CD8-positive, alpha-beta T cell (primary cell): ENCODE measurements at regions of chr22 and their contacts with region 1.

Region 1: DNA sequence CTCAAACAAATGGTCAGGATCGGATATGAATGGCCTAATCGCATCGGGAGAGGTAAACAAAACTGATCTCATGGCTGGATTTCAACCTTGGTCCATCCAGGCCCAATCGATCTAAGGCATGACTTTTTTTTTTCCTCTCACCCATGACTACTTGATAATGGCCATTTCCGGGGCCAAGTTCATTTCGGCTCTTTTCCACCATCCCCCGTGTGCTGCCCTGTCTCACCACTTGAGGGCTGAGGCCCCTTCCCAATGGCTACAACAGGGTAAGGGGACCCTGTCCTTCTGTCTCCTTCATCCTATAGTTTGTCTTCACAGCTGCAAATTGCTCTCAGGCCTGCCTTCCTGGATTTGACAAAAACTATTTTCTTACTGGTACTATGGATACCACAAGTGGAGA is 26.7 kb downstream of the GRAP2 start:
- DNase-seq: peak in 2 of 9 experiments; percentile 11 to 52
- ATAC-seq: no peak
- H3K4me3 ChIP-seq: peak overlapping the region; percentile 56 to 76
- H3K4me3 Mint-ChIP-seq: no peak overlapping the region
- H3K27ac ChIP-seq: peak overlapping the region; percentile 29 to 49
- H3K27ac Mint-ChIP-seq: no peak overlapping the region
- H3K4me1 ChIP-seq: peaks cover 82% of the 10 kb centered on the region
- H3K4me1 Mint-ChIP-seq: peaks cover 40% of the 10 kb centered on the region
- H3K27me3 ChIP-seq: no peaks in the 10 kb centered on the region
- H3K27me3 Mint-ChIP-seq: no peaks in the 10 kb centered on the region
- CTCF ChIP-seq: peak; percentile 20

Region 2: DNA sequence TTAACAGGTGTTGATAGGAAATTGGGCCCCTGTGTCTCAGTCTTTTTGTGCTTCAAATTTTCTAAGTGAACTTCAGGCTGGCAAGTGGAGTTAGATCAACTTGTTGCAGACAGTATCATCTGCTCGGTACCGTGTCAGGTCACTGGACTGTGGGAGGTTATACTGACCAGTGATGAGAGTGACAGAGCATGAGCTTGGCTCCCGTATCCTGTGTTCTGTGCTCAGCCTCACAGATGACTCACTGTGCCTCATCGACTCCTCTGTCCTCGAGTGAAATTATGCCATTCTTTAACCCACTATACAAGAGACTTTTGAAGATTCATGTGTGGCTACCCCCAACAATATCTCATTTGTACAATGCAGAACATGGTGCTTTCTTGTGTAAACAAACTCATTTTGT is 18.8 kb before region 1 on chr22:
- CTCF ChIA-PET with region 1: interaction called, 58 read pairs
- POLR2A ChIA-PET with region 1: interaction called, 260 read pairs
- intact Hi-C with region 1: loop called in 1 of 2 experiments (anchors 2 kb)
- DNase-seq: peak in 5 of 9 experiments; percentile 48 to 72 (median 53)
- ATAC-seq: peak; percentile 51
- H3K4me3 ChIP-seq: peak overlapping the region; percentile 57 to 77
- H3K4me3 Mint-ChIP-seq: peak overlapping the region; percentile 97
- H3K27ac ChIP-seq: peak overlapping the region; percentile 20 to 80
- H3K27ac Mint-ChIP-seq: peak overlapping the region; percentile 97
- H3K4me1 ChIP-seq: peaks cover 61% of the 10 kb centered on the region
- H3K4me1 Mint-ChIP-seq: peaks cover 79% of the 10 kb centered on the region
- H3K27me3 ChIP-seq: no peaks in the 10 kb centered on the region
- H3K27me3 Mint-ChIP-seq: no peaks in the 10 kb centered on the region
- CTCF ChIP-seq: no peak

Region 3: DNA sequence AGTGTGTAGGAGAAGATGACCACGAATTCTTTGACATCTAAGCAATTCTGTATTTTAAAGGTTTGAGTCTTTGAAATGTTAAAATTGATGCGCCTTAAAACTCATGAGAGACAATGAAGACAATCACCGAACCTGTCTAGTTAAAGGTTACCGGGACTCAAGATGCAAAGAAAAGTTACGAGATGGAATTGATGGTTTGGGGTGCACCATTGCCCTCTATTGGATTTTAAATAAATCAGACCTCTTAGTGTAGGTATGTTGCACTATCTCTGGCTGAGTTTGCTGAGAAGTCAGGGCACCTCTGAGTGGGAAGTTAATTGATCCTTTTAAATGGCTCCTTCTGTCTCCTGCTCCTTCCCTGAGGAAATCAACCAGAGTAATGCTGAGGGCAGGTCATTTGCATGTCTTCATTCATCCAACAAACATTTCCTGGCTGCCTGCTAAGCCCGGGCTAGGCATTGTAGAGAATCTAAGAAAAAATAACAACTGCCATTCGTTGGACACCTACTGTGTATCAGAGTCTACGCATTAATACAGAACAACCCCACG is 13.3 kb after region 1 on chr22:
- CTCF ChIA-PET with region 1: interaction called, 20 read pairs
- POLR2A ChIA-PET with region 1: interaction called, 25 read pairs
- intact Hi-C with region 1: loop called in 1 of 2 experiments (anchors 1 kb)
- DNase-seq: peak in 2 of 9 experiments; percentile 78 to 87
- ATAC-seq: peak; percentile 49
- H3K4me3 ChIP-seq: peak overlapping the region in 1 of 2 experiments; percentile 40
- H3K4me3 Mint-ChIP-seq: peak overlapping the region; percentile 56
- H3K27ac ChIP-seq: peak overlapping the region; percentile 22 to 76
- H3K27ac Mint-ChIP-seq: no peak overlapping the region
- H3K4me1 ChIP-seq: peaks cover 98% of the 10 kb centered on the region
- H3K4me1 Mint-ChIP-seq: peaks cover 92% of the 10 kb centered on the region
- H3K27me3 ChIP-seq: no peaks in the 10 kb centered on the region
- H3K27me3 Mint-ChIP-seq: no peaks in the 10 kb centered on the region
- CTCF ChIP-seq: peak; percentile 62

Region 4: GRCh38 chr22:39954584-39955055 is 27.1 kb after region 1 on chr22:
- CTCF ChIA-PET with region 1: interaction called, 7 read pairs
- POLR2A ChIA-PET with region 1: interaction called, 12 read pairs
- intact Hi-C with region 1: no loop called
- DNase-seq: no peak
- ATAC-seq: no peak
- H3K4me3 ChIP-seq: no peak overlapping the region
- H3K4me3 Mint-ChIP-seq: no peak overlapping the region
- H3K27ac ChIP-seq: peak overlapping the region in 1 of 2 experiments; percentile 31
- H3K27ac Mint-ChIP-seq: peak overlapping the region; percentile 92
- H3K4me1 ChIP-seq: peaks cover 94% of the 10 kb centered on the region
- H3K4me1 Mint-ChIP-seq: peaks cover 88% of the 10 kb centered on the region
- H3K27me3 ChIP-seq: no peaks in the 10 kb centered on the region
- H3K27me3 Mint-ChIP-seq: no peaks in the 10 kb centered on the region
- CTCF ChIP-seq: no peak